Stomach (tissue), 19 donors: ENCODE measurements at regions of chr20 and their contacts with region 1.

Region 1: GRCh38 chr20:5316188-5317158 is at the start of gene PROKR2:
- DNase-seq: peak in 1 of 2 donors; percentile 28
- H3K4me3 ChIP-seq: peak within 1 kb of the TSS in 2 of 4 donors; percentile 27 to 33
- H3K27ac ChIP-seq: no peak within 1 kb of the TSS
- H3K4me1 ChIP-seq: peaks cover 0 to 12% (median 9%) of the 10 kb centered on the region in 4 donors
- H3K27me3 ChIP-seq: peaks cover 12 to 63% (median 24%) of the 10 kb centered on the region in 3 donors
- CTCF ChIP-seq: no peak
- EP300 ChIP-seq: no peak
- POLR2A ChIP-seq: no peak
- total RNA-seq, gene PROKR2: not detected

Region 2: DNA sequence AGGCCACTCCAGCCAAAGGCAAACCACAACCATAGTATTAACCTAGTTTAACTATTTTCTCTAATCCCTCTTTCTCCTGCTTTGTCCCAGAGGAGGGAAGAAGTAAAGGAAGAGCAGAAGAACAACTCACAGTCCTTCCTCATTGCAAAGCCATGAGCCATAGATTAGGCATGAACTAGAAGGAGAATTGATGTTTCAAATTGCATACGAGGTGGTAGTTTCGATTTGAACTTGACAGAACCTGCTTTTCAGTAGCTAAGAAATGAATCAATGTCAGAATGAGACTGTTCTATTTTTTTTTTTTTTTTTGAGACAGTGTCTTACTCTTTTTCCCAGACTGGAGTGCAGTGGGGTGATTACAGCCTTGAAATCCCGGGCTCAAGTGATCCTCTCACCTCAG is 48.0 kb before region 1 on chr20:
- intact Hi-C with region 1: loop called (anchors 10 kb)
- DNase-seq: no peak
- H3K4me3 ChIP-seq: no peak overlapping the region
- H3K27ac ChIP-seq: no peak overlapping the region
- H3K4me1 ChIP-seq: no peaks in the 10 kb centered on the region
- H3K27me3 ChIP-seq: no peaks in the 10 kb centered on the region
- CTCF ChIP-seq: no peak
- EP300 ChIP-seq: no peak
- POLR2A ChIP-seq: no peak